ENCODE measurements at regions of chr15 and their contacts with region 1.

Region 1: DNA sequence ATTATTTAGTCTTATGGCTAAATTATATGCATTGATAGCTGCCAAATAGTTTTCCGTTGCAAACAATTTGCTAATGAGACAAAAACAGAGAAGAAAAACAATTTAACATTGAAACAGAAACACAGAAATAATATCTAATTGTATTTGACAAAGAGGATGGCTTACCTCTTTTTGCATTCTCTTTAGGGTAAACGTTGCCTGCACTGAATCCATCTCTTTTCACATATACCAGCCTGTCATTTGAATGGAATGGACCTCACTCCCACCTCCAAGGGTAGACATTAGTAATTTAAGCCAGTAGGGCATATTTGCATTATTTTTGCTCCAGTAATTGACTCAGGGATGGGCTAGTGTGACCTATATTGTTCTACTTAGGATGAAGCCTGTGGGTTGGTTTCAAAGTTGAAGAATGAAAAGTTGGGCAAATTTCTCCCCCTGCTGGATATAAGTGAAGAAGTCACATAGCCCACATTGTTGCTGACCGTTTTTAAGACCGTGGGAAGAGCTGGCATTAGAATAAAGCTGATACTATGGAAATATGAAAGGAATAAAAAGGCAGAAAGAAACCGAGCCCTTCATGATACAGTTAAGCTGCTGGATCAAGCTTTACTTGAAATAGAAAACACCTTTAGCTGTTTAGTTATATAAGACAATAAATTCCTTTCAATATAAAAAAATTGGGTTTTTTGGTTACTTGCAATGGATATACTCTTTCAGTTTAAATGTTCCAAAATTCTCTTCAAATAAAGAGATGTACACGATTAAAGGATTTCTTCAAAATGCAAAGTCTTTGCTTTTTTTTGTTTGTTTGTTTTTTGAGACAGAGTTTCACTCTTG is 26.9 kb downstream of the PIERCE2 start:
- DNase-seq: peak; percentile 67
- H3K4me3 Mint-ChIP-seq: no peak overlapping the region
- H3K27ac Mint-ChIP-seq: no peak overlapping the region
- H3K4me1 Mint-ChIP-seq: no peaks in the 10 kb centered on the region
- H3K27me3 Mint-ChIP-seq: no peaks in the 10 kb centered on the region
- CTCF ChIP-seq: peak; percentile 64

Region 2: DNA sequence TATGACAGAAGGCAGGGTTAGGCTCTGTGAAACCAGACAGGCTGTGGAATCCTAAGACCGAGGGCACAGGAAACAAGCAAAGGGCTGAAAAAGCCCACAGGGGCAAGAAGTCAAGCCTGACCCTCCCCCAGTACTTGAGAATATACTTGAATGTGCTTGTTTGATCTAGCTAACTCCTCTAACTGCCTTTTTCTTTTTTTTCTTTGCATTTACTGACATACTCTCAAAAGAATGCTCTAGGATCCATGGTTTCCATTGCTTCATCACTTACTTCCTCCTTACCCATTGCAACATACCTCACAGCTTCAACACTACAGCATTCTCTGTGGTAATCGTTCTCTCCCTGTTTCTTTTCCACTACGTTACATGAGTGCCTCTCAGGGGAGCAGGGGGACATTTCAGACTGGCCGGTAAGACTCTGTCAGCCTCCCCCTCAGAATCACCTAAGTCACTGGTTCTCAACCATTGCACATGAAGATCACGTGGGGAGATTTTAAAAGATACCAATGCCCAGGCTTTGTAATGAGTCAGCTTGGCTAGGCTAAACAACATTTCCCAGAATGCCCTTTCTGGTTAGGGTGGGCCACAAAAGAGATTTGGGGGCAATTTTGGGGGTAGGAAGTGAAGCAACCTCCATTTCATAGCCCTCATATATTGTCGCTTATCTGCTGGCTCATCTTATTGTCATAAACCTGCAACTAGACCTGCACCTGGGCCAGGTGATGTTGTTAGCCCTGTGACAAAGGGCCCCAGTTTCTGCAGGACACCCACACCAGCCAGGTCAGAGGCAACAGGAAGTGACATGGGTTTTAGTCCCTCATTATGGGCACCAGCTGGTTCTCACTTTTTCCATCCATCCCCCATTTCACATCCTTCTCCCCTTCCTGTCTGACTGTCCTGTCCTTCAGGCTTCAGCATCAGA is 213.9 kb before region 1 on chr15:
- CTCF ChIA-PET with region 1: interaction called, 25 read pairs
- POLR2A ChIA-PET with region 1: interaction called, 4 read pairs
- intact Hi-C with region 1: loop called (anchors 1 kb)
- DNase-seq: peak; percentile 90
- H3K4me3 Mint-ChIP-seq: peak overlapping the region; percentile 34
- H3K27ac Mint-ChIP-seq: peak overlapping the region; percentile 91
- H3K4me1 Mint-ChIP-seq: peaks cover 22% of the 10 kb centered on the region
- H3K27me3 Mint-ChIP-seq: no peaks in the 10 kb centered on the region
- CTCF ChIP-seq: no peak

Region 3: DNA sequence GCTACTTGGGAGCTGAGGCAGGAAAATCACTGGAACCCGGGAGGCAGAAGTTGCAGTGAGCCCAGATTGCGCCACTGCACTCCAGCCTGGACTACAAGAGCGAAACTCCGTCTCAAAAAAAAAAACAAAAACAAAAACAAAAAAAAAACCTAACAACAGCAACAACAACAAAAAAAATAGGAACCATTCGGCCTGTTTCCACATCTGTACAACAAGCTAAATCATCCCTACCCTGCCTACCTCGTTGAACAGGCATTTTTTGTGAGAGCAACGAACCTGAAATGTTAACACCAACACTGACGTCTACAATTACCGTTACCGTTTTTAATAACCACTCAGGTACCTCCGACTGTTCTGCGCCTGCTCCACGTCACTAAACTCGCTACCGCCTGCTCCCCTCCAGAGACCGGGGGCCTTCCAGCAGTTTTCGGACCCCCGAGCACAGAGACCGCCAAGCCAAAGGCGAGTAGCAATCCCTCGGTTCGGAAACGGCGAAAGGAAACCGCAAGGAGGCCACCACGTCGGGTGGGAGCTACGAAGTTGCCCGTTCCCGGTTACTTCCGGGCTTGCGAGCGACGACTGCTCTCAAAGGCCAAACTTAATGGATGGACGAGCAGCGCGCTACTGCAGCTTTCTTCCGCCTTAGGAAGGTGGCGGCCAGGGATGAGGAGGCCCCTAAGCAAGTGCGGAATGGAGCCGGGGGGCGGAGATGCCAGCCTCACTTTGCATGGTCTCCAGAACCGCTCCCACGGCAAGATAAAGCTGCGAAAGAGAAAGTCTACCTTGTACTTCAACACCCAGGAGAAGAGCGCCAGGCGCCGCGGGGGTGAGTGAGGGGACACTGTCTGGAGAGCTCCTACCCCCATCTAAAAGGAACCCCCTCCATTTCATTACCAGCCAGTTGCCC is 116.4 kb before region 1 on chr15 and contains the starts of genes PIGB and PIGBOS1:
- CTCF ChIA-PET with region 1: interaction called, 4 read pairs
- POLR2A ChIA-PET with region 1: interaction called, 5 read pairs
- intact Hi-C with region 1: loop called (anchors 1 kb)
- DNase-seq: peak; percentile 86
- H3K4me3 Mint-ChIP-seq: peak within 1 kb of the TSS; percentile 93
- H3K27ac Mint-ChIP-seq: peak within 1 kb of the TSS; percentile 98
- H3K4me1 Mint-ChIP-seq: peaks cover 15% of the 10 kb centered on the region
- H3K27me3 Mint-ChIP-seq: no peaks in the 10 kb centered on the region
- CTCF ChIP-seq: no peak
- total RNA-seq, gene PIGB: 16.2 and 22.2 TPM in 2 replicates
- total RNA-seq, gene PIGBOS1: 13.9 and 16.1 TPM in 2 replicates

Region 4: DNA sequence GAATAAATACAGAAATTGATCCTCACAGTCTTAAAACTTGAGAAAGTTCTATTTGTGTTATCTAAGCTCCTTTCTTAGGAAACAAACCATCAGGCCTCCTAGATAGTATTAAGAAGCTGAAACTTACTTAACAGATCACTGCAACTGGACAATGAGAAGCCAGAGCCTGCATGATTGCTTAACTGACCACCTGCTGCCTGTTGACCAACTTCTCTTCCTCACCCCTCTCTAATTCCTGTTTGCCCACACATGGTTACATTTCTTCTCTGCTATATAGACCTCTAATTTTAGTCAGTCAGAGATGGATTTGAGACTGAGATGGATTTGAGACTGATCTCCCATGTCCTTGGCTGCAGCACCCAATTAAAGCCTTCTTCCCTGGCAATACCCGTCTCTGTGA is 40.5 kb before region 1 on chr15:
- CTCF ChIA-PET with region 1: interaction called, 14 read pairs
- POLR2A ChIA-PET with region 1: interaction called, 3 read pairs
- intact Hi-C with region 1: no loop called
- DNase-seq: no peak
- H3K4me3 Mint-ChIP-seq: no peak overlapping the region
- H3K27ac Mint-ChIP-seq: no peak overlapping the region
- H3K4me1 Mint-ChIP-seq: peaks cover 6% of the 10 kb centered on the region
- H3K27me3 Mint-ChIP-seq: no peaks in the 10 kb centered on the region
- CTCF ChIP-seq: no peak

Region 5: DNA sequence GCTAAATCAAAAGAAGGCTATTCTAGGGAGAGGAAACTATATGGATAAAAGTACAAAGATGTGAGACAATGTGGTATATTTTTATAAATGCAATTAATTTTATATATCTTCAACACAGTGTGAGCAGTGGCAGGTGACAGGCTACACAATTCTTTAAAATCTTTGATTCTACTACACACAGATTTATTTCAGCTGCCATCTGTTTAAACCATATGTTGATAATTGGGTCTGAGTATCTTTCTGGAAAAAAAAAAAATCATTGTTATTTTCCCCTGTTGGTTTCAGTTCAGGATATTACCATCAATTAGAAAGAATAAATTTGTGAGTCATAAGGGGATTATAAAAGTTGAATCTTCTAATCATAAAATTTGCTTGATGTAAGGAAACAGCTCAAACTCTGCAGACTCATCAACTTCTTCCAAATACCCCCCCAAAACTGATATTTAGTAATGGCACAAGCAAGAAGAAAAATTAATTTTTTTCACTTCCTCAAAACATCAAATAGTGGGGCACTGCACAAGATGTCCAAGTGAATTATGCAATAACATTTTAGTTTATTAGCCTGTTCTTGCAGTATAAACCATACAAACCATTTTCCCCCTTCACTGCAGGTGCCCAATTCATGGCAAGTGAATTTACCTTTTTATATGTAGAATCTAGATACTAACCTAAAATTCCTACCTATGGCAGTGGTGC is 14.9 kb before region 1 on chr15:
- CTCF ChIA-PET with region 1: interaction called, 24 read pairs
- POLR2A ChIA-PET with region 1: interaction called, 4 read pairs
- intact Hi-C with region 1: no loop called
- DNase-seq: no peak
- H3K4me3 Mint-ChIP-seq: no peak overlapping the region
- H3K27ac Mint-ChIP-seq: no peak overlapping the region
- H3K4me1 Mint-ChIP-seq: no peaks in the 10 kb centered on the region
- H3K27me3 Mint-ChIP-seq: no peaks in the 10 kb centered on the region
- CTCF ChIP-seq: no peak

Region 6: DNA sequence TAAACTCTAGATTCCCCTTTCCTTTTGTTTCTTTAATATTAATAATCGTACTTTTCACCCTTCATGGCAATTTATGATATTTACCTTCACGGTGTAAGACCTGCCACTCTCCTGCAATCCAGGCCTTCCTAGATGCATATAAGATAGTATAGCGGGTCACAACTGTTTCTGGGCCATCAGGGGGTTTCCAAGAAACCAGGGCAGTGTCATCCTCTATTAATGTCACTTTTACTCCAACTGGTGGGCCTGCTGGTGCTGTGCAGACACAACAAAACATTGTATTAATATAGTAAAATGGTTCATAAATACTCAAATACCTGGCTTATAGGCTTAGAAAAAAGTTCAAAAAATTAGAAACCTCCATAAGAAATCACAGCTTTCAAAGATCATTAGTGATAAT is 201.9 kb after region 1 on chr15:
- CTCF ChIA-PET with region 1: interaction called, 11 read pairs
- POLR2A ChIA-PET with region 1: no interaction called
- intact Hi-C with region 1: loop called (anchors 1 kb)
- DNase-seq: no peak
- H3K4me3 Mint-ChIP-seq: no peak overlapping the region
- H3K27ac Mint-ChIP-seq: no peak overlapping the region
- H3K4me1 Mint-ChIP-seq: peaks cover 6% of the 10 kb centered on the region
- H3K27me3 Mint-ChIP-seq: no peaks in the 10 kb centered on the region
- CTCF ChIP-seq: no peak

Region 7: DNA sequence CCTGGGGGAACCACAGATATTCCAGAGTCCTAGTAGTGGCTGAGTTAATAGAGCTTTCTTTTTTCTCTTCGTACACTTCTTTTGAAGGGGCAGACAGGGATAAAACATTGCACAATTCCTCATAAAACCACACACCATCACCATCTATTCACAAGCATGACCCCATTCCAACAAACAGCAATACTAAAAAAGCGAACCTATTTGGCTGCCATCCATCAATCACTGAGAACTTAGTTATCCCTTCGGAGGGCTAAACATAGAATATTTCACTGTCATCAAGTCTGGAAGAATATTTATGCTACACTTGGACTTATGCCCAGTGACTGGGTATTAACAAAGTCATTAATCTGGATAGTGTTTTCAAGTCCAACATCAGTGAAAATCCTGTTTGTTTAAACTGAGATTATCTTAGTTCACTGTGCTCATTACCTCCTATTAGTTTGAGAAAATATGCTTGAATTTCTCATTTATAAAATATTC is 388.0 kb after region 1 on chr15:
- CTCF ChIA-PET with region 1: no interaction called
- POLR2A ChIA-PET with region 1: no interaction called
- intact Hi-C with region 1: no loop called
- DNase-seq: peak; percentile 50
- H3K4me3 Mint-ChIP-seq: no peak overlapping the region
- H3K27ac Mint-ChIP-seq: no peak overlapping the region
- H3K4me1 Mint-ChIP-seq: no peaks in the 10 kb centered on the region
- H3K27me3 Mint-ChIP-seq: no peaks in the 10 kb centered on the region
- CTCF ChIP-seq: no peak

Region 8: GRCh38 chr15:56524915-56525314 is 1089.7 kb after region 1 on chr15:
- CTCF ChIA-PET with region 1: no interaction called
- POLR2A ChIA-PET with region 1: no interaction called
- intact Hi-C with region 1: no loop called
- DNase-seq: peak; percentile 6
- H3K4me3 Mint-ChIP-seq: no peak overlapping the region
- H3K27ac Mint-ChIP-seq: no peak overlapping the region
- H3K4me1 Mint-ChIP-seq: peaks cover 6% of the 10 kb centered on the region
- H3K27me3 Mint-ChIP-seq: peaks cover 42% of the 10 kb centered on the region
- CTCF ChIP-seq: no peak

Measured in MCF 10A (cell line).